Activated CD4-positive, alpha-beta T cell treated with anti-CD3 and anti-CD28 coated beads, Interleukin-2, amount 10 ng/mL, durations not matched to agents 24 days and 14 days (primary cell): ENCODE measurements at regions of chr14 and their contacts with region 1.

Region 1: GRCh38 chr14:21383848-21384493 is at the start of gene SUPT16H:
- DNase-seq: peak; percentile 98
- H3K4me3 Mint-ChIP-seq: peak within 1 kb of the TSS; percentile 94
- H3K27ac Mint-ChIP-seq: peak within 1 kb of the TSS; percentile 99
- H3K4me1 Mint-ChIP-seq: peaks cover 35% of the 10 kb centered on the region
- H3K27me3 Mint-ChIP-seq: no peaks in the 10 kb centered on the region
- total RNA-seq, gene SUPT16H: 170 and 174 TPM in 2 replicates

Region 2: GRCh38 chr14:20970983-20971704 is 412.8 kb before region 1 on chr14:
- intact Hi-C with region 1: no loop called
- DNase-seq: peak; percentile 95
- H3K4me3 Mint-ChIP-seq: peak overlapping the region; percentile 92
- H3K27ac Mint-ChIP-seq: peak overlapping the region; percentile 70
- H3K4me1 Mint-ChIP-seq: peaks cover 13% of the 10 kb centered on the region
- H3K27me3 Mint-ChIP-seq: peaks cover 50% of the 10 kb centered on the region

Region 3: DNA sequence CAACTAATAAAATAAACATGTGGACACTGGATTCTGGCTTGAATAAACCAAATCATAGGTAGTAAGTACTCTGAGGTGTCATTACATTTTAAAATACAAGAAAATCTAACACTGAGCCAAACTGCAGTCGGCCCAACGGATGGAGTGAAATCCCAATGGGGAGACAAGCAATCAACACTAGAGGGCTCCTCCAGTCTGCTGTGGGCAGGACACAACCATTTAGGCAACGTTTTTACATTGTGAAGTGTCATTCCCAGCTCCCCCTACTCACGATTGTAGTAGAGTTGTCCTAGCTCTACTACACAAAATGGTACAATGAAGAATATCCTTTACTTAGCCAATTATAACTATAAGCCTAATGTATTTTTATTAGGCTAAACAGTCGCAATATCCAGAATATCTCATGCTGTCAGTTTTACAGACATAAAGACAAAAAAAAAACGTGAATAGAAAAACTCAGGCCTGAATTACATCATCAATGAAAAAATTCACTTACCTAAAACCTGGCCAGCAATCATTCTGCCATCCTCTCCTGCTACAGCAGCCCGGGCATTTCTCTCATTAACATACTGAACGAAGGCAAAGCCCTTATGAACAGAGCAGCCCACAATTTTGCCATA is 150.4 kb before region 1 on chr14:
- intact Hi-C with region 1: loop called (anchors 10 kb)
- DNase-seq: no peak
- H3K4me3 Mint-ChIP-seq: peak overlapping the region; percentile 6
- H3K27ac Mint-ChIP-seq: peak overlapping the region; percentile 4
- H3K4me1 Mint-ChIP-seq: peaks cover 67% of the 10 kb centered on the region
- H3K27me3 Mint-ChIP-seq: no peaks in the 10 kb centered on the region

Region 4: DNA sequence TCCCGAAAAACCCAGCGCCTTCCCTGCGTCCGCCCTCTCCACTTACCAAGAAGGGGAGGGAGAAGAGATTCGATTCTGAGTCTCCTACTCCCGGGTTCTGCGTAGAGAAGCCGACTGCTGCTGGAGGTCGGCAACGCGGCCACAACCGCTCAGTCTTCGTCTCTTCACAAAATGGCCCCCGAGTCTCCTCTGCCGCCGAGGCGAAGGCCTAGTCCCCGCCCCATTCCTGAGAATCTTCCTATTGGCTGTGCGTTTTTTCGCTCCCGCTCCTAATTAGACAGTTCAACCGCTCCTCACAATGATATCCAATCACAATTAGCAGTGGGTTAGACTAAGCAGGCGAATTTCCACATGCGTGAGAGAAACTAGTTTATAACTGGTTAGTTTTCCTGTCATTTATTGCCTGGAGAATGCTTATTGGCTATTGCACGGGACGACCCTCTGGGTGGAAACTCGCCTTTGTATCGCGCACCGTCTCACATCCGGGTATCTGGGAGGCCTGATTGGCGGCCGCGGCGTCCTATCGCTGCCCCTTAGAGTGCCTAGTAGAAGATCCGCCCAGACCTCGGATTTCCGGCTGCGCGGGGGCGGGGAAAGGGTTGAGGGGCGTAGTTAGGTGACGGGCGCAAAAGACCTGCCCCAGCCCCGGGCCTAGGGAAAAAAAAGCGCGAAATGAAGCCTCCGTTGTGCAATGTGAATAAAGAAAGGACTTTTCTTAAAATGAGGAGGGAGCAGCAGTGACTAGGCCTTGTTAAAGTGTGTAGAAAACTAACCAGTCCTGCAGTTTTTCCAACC is 114.5 kb before region 1 on chr14 and contains the start of gene HNRNPC:
- intact Hi-C with region 1: loop called (anchors 1 kb)
- DNase-seq: peak; percentile 100
- H3K4me3 Mint-ChIP-seq: peak within 1 kb of the TSS; percentile 92
- H3K27ac Mint-ChIP-seq: peak within 1 kb of the TSS; percentile 100
- H3K4me1 Mint-ChIP-seq: peaks cover 30% of the 10 kb centered on the region
- H3K27me3 Mint-ChIP-seq: no peaks in the 10 kb centered on the region
- total RNA-seq, gene HNRNPC: 1,009 and 1,054 TPM in 2 replicates

Region 5: DNA sequence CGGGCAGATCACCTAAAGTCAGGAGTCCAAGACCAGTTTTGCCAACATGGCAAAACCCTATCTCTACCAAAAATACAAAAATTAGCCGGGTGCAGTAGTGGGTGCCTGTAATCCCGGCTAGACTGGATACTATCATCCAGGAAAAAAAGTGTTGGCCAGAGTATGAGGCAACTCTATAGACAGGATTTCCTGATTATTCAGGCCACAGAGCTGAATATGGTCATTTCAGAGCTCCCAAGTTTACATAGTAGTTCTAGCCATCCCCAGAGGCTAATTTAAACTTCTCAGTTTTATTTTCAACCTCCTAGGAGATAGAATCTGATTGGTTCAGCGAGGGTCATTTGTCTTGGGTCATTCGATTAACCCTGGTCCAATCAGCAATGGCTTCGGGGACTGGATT is 96.8 kb before region 1 on chr14:
- intact Hi-C with region 1: no loop called
- DNase-seq: no peak
- H3K4me3 Mint-ChIP-seq: no peak overlapping the region
- H3K27ac Mint-ChIP-seq: no peak overlapping the region
- H3K4me1 Mint-ChIP-seq: no peaks in the 10 kb centered on the region
- H3K27me3 Mint-ChIP-seq: peaks cover 13% of the 10 kb centered on the region

Region 6: DNA sequence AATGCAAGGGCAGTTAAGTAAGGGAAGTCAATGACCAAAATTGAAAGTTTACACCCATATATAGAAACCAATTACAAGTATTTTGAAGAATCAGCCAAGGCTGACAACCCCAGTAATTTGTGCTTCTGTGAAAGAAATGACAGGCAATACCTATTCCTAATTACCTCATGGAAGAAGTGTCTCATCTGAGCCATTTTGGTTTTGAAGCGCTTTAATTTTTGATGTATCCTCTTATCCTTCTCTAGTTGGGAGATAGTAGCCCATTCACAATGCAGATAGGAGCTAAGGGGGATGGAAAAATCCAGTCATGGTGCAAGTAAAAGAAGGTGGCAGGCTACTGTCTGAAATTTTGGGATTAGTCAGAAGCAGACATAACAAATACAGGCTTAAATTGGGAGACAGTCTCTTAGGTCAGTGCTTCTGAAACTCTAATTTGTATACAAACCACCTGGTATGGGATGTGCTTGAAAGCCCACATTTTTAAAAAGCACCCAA is 30.2 kb after region 1 on chr14:
- intact Hi-C with region 1: loop called (anchors 1 kb)
- DNase-seq: no peak
- H3K4me3 Mint-ChIP-seq: peak overlapping the region; percentile 11
- H3K27ac Mint-ChIP-seq: peak overlapping the region; percentile 86
- H3K4me1 Mint-ChIP-seq: peaks cover 14% of the 10 kb centered on the region
- H3K27me3 Mint-ChIP-seq: no peaks in the 10 kb centered on the region

Region 7: DNA sequence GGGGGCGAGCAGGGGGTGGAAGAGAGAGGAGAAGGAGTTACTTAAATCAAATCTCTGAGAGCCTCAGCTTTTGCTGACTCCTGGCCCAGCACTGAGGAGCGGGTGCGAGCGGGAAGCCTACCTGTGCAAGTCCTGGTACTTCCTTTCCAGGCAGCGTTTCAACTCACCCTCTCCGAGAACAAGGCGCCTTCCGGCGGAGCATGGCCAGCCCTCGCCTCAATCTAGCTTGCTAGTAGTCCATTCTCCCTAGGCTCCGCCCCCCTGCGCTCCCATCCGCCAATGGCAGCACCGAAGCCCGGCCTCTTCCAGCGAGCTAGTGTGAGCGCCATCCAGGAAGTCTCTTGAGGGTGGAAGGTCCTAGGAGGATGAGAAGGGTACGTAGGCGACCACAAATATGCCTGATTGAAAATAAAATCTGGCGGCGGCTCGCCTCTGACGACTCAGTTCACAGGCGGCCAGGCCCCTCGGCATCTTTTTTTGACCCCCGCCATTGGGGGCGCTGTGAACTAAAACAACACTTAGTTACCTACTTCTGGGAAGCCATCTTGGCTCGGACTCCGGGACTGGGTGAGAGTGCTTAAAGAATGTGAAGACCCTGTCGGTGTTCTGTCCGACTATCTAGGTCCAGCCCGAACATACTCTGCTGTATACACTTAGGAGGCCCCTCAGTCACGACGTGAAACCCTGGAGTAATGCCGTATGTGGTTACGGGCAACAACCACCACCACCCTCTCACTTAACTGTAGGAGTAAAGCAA is 72.1 kb after region 1 on chr14 and contains the start of gene CHD8:
- intact Hi-C with region 1: loop called (anchors 1 kb)
- DNase-seq: peak; percentile 100
- H3K4me3 Mint-ChIP-seq: peak within 1 kb of the TSS; percentile 95
- H3K27ac Mint-ChIP-seq: peak within 1 kb of the TSS; percentile 97
- H3K4me1 Mint-ChIP-seq: peaks cover 26% of the 10 kb centered on the region
- H3K27me3 Mint-ChIP-seq: no peaks in the 10 kb centered on the region
- total RNA-seq, gene CHD8: 104 and 115 TPM in 2 replicates

Region 8: GRCh38 chr14:21510735-21511657 is 127.0 kb after region 1 on chr14 and contains the start of gene METTL3:
- intact Hi-C with region 1: loop called (anchors 1 kb)
- DNase-seq: peak; percentile 98
- H3K4me3 Mint-ChIP-seq: peak within 1 kb of the TSS; percentile 99
- H3K27ac Mint-ChIP-seq: peak within 1 kb of the TSS; percentile 98
- H3K4me1 Mint-ChIP-seq: peaks cover 28% of the 10 kb centered on the region
- H3K27me3 Mint-ChIP-seq: peaks cover 4% of the 10 kb centered on the region
- total RNA-seq, gene METTL3: 72.9 and 81.7 TPM in 2 replicates